AG04449 (cell line): ENCODE measurements at regions of chr13 and their contacts with region 1.

Region 1: DNA sequence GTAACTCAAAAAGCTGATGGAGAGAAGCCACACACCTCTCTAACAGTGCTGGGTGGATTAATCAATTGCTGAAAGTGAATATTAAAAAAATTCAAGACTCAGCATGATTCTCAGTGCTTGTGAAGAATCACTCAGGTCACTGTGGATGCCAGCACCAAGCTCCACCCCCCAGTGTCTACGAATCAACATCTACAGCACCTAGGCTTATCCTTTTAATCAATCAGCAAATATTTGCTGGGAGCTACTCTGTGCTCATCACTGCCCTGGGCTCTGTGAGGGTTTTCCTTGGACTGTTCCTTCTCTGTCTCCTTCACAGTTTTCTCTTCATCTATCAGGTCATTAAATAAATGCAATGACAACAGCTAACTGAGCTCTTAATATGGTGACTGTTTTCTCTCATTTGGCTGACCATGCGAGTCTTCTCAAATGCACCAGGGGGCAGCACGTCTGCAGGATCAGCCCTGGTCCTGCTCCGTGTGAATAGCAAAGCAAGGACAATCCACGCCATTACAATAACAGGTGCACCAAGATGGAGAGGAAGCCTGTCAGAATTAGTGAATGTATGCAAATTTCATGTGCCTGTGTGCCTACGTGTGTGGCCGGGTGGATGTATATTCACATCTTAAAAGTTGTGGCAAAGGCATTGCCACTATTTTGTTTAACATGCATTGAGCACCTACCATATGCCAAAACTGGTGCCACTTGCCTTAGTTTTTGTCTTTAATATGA is 14.6 kb upstream of the C13orf42 start:
- DNase-seq: no peak
- H3K4me3 ChIP-seq: no peak overlapping the region
- CTCF ChIP-seq: peak; percentile 84

Region 2: GRCh38 chr13:51105046-51105445 is 20.6 kb before region 1 on chr13:
- CTCF ChIA-PET with region 1: interaction called, 12 read pairs
- POLR2A ChIA-PET with region 1: interaction called, 4 read pairs
- DNase-seq: no peak
- H3K4me3 ChIP-seq: no peak overlapping the region
- CTCF ChIP-seq: no peak

Region 3: GRCh38 chr13:51112771-51113170 is 12.9 kb before region 1 on chr13:
- CTCF ChIA-PET with region 1: interaction called, 45 read pairs
- POLR2A ChIA-PET with region 1: interaction called, 4 read pairs
- DNase-seq: no peak
- H3K4me3 ChIP-seq: no peak overlapping the region
- CTCF ChIP-seq: no peak

Region 4: GRCh38 chr13:51425410-51426042 is 299.9 kb after region 1 on chr13:
- CTCF ChIA-PET with region 1: no interaction called
- POLR2A ChIA-PET with region 1: no interaction called
- DNase-seq: peak; percentile 10
- H3K4me3 ChIP-seq: no peak overlapping the region
- CTCF ChIP-seq: no peak

Region 5: GRCh38 chr13:51803422-51804294 is 678.0 kb after region 1 on chr13 and contains the start of gene DHRS12:
- CTCF ChIA-PET with region 1: interaction called, 47 read pairs
- POLR2A ChIA-PET with region 1: no interaction called
- DNase-seq: no peak
- H3K4me3 ChIP-seq: peak within 1 kb of the TSS; percentile 74
- CTCF ChIP-seq: no peak